ENCODE measurements at regions of chr9 and their contacts with region 1.

Region 1: GRCh38 chr9:114653556-114654159 is 3.9 kb downstream of the TEX53 start:
- DNase-seq: peak; percentile 76
- H3K4me3 ChIP-seq: no peak overlapping the region
- H3K27ac ChIP-seq: no peak overlapping the region
- H3K4me1 ChIP-seq: no peaks in the 10 kb centered on the region
- H3K27me3 ChIP-seq: peaks cover 0 to 1% of the 10 kb centered on the region in 2 experiments
- CTCF ChIP-seq: peak; percentile 89 to 93
- POLR2A ChIP-seq: no peak

Region 2: GRCh38 chr9:114004221-114004716 is 649.4 kb before region 1 on chr9:
- CTCF ChIA-PET with region 1: no interaction called
- POLR2A ChIA-PET with region 1: no interaction called
- dilution Hi-C with region 1: no loop called
- intact Hi-C with region 1: no loop called
- DNase-seq: peak; percentile 63
- H3K4me3 ChIP-seq: no peak overlapping the region
- H3K27ac ChIP-seq: peak overlapping the region; percentile 75
- H3K4me1 ChIP-seq: peaks cover 24% of the 10 kb centered on the region
- H3K27me3 ChIP-seq: no peaks in the 10 kb centered on the region
- CTCF ChIP-seq: no peak
- POLR2A ChIP-seq: no peak

Region 3: GRCh38 chr9:114405294-114406034 is 248.2 kb before region 1 on chr9:
- CTCF ChIA-PET with region 1: interaction called, 397 read pairs
- POLR2A ChIA-PET with region 1: no interaction called
- dilution Hi-C with region 1: no loop called
- intact Hi-C with region 1: loop called (anchors 1 kb)
- DNase-seq: peak; percentile 75
- H3K4me3 ChIP-seq: no peak overlapping the region
- H3K27ac ChIP-seq: no peak overlapping the region
- H3K4me1 ChIP-seq: no peaks in the 10 kb centered on the region
- H3K27me3 ChIP-seq: peaks cover 0 to 2% of the 10 kb centered on the region in 2 experiments
- CTCF ChIP-seq: peak; percentile 75 to 84
- POLR2A ChIP-seq: no peak

Region 4: DNA sequence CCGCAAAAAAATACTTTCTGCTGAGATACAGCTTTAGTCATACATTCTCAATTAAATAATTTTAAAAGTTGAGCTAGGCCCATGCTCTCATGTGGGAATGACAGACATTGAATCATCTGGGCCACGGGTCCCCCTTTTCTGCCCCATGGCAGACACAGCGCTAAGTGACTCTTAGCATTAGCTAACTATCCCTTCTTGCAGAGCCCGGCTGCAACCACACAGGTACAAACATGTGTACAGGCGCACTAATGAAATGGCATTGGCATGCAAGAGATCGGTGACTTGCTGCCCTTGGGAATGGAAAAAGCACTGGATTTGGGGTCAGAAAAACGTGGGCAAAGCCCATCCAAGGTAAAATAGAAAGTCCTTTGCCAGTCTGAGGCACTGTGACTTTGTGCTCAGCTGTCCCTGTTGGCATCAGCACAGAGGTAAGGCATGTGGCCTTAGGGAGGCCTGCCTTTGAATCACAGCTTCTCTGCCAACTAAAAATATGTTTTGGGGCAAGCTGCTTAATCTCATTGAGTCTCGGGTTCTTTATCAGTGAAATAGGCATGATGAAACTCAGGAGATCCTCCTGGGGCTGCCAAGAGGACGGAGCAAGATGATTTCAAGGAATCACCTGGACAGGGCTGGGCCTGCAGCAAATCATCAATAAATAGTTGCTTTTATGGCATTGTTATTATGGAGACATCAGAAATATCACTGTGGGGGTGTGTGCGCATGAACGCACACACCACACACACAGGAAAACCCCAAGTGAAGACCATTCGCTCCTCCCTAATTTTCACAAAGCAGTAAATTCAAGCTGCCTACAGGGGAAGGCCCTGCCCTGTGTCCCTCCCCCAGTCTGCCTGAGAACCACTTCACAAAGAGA is 202.6 kb before region 1 on chr9:
- CTCF ChIA-PET with region 1: interaction called, 10 read pairs
- POLR2A ChIA-PET with region 1: no interaction called
- dilution Hi-C with region 1: no loop called
- intact Hi-C with region 1: no loop called
- DNase-seq: no peak
- H3K4me3 ChIP-seq: no peak overlapping the region
- H3K27ac ChIP-seq: no peak overlapping the region
- H3K4me1 ChIP-seq: peaks cover 6% of the 10 kb centered on the region
- H3K27me3 ChIP-seq: peaks cover 2 to 6% of the 10 kb centered on the region in 2 experiments
- CTCF ChIP-seq: no peak
- POLR2A ChIP-seq: no peak

Region 5: GRCh38 chr9:114505187-114506081 is 148.2 kb before region 1 on chr9 and contains the start of gene WHRN:
- CTCF ChIA-PET with region 1: interaction called, 31 read pairs
- POLR2A ChIA-PET with region 1: no interaction called
- dilution Hi-C with region 1: no loop called
- intact Hi-C with region 1: loop called (anchors 1 kb)
- DNase-seq: peak; percentile 83
- H3K4me3 ChIP-seq: peak within 1 kb of the TSS; percentile 11 to 47 (median 39)
- H3K27ac ChIP-seq: no peak within 1 kb of the TSS
- H3K4me1 ChIP-seq: peaks cover 6% of the 10 kb centered on the region
- H3K27me3 ChIP-seq: peaks cover 57 to 82% of the 10 kb centered on the region in 2 experiments
- CTCF ChIP-seq: no peak
- POLR2A ChIP-seq: no peak
- total RNA-seq, gene WHRN: 0.69 and 1.1 TPM in 2 replicates

Region 6: DNA sequence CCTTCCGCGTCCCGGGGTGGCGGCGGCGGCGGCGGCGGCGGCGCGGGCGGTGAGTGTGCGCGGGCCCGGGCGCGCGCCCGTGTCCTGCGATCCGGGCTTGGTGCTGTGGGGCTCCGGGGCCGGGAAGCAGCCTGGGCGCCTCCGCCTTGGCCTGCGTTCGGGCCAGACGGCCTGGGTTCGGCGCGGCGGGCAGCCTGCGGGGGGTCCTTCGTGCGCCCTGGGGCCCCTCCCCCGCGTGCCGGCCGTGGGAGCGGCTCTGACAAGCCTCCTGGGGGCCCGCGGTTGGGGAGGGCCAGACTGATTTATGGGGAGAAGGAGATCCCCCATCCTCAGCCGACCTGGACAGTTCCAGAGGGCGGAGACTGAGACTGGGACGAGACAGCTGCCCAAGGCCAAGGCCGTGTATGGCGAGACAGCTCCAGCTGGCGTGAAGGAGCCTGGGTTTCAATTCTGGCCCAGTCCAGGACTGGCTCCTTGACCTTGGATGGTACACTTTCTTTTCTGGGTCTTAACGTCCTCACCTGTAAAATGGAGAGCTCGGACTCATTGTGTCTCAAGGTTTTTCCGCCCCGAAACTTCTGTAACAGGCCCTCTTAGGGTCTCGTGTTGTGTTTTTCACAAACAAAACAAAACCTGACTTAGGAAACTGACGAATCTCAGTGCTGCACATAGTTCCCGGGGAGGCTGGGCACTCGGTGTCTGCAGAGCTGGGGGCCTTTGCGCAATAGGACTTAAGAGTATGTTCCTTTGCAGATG is 42.0 kb before region 1 on chr9:
- CTCF ChIA-PET with region 1: interaction called, 15 read pairs
- POLR2A ChIA-PET with region 1: no interaction called
- dilution Hi-C with region 1: no loop called
- intact Hi-C with region 1: no loop called
- DNase-seq: peak; percentile 57
- H3K4me3 ChIP-seq: peak overlapping the region; percentile 2 to 35 (median 22)
- H3K27ac ChIP-seq: no peak overlapping the region
- H3K4me1 ChIP-seq: peaks cover 10% of the 10 kb centered on the region
- H3K27me3 ChIP-seq: no peaks in the 10 kb centered on the region
- CTCF ChIP-seq: no peak
- POLR2A ChIP-seq: no peak

Region 7: DNA sequence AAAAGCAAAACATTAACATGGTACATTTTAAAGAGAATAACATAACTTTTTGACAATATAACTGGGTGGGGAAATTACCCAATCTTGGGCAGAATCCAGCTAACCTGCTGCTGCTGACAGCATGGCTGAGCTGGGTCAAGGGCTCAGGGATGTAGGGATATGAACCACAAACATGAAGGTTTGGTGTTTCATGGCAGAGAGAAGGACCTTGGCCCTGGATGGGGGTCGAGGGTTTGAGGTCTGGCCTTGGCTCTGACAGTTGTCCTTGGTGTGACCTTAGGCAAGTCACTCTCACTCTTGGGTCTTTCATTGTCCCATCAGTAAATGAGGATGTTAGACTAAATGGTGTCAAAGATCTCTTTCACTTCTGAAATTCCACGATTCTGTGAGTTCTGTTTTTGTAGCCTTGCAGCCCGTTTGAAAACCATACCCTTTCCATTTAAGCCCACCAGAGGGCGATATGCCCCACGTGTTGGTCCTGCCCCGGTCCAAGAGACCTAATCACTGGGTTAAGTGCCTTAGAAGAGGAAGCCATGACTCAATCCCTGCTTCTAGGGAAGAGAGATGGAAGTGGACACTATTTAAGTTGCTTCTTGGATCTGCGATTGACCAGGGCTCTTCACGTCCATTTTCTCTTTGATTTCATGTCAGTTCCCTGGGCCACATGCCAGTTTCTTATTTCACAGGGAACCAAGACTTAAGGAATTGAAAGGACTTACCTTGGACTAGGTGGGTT is 85.1 kb after region 1 on chr9:
- CTCF ChIA-PET with region 1: no interaction called
- POLR2A ChIA-PET with region 1: no interaction called
- dilution Hi-C with region 1: no loop called
- intact Hi-C with region 1: no loop called
- DNase-seq: peak; percentile 89
- H3K4me3 ChIP-seq: no peak overlapping the region
- H3K27ac ChIP-seq: peak overlapping the region; percentile 23
- H3K4me1 ChIP-seq: peaks cover 4% of the 10 kb centered on the region
- H3K27me3 ChIP-seq: no peaks in the 10 kb centered on the region
- CTCF ChIP-seq: peak; percentile 69 to 90
- POLR2A ChIP-seq: no peak

Region 8: GRCh38 chr9:114906908-114907571 is 253.4 kb after region 1 on chr9:
- CTCF ChIA-PET with region 1: interaction called, 11 read pairs
- POLR2A ChIA-PET with region 1: no interaction called
- dilution Hi-C with region 1: no loop called
- intact Hi-C with region 1: no loop called
- DNase-seq: peak; percentile 78
- H3K4me3 ChIP-seq: no peak overlapping the region
- H3K27ac ChIP-seq: no peak overlapping the region
- H3K4me1 ChIP-seq: peaks cover 12% of the 10 kb centered on the region
- H3K27me3 ChIP-seq: no peaks in the 10 kb centered on the region
- CTCF ChIP-seq: peak; percentile 80 to 85
- POLR2A ChIP-seq: no peak

Region 9: DNA sequence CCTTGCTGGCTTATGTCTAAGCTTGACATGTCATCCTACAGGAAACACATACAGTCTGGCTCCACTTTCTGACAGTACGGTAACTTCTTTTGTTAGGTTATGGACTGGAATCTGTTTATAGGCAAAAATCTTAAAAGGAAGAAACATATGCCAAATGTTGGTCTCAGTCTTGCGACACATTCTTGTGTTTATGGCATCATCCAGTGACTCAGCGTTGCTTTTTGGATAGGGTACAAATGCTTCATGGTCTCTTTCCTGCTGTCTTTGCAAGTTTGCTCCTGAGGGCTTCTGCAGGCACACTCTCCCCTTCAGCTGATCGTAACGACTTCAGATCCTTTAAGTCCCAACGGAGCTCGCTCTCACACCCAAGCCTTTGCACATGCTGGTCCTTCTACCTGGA is 300.3 kb after region 1 on chr9:
- CTCF ChIA-PET with region 1: no interaction called
- POLR2A ChIA-PET with region 1: no interaction called
- dilution Hi-C with region 1: no loop called
- intact Hi-C with region 1: no loop called
- DNase-seq: no peak
- H3K4me3 ChIP-seq: no peak overlapping the region
- H3K27ac ChIP-seq: no peak overlapping the region
- H3K4me1 ChIP-seq: no peaks in the 10 kb centered on the region
- H3K27me3 ChIP-seq: no peaks in the 10 kb centered on the region
- CTCF ChIP-seq: no peak
- POLR2A ChIP-seq: no peak

Measured in endothelial cell of umbilical vein (primary cell).